ENCODE measurements at regions of chr13 and their contacts with region 1.

Region 1: GRCh38 chr13:74133657-74134201 is 475 bp downstream of the KLF12 start:
- DNase-seq: peak; percentile 84 to 89
- ATAC-seq: peak; percentile 64 to 89 (median 73)
- H3K4me3 ChIP-seq: peak overlapping the region; percentile 65 to 98 (median 89)
- H3K27ac ChIP-seq: peak overlapping the region; percentile 93 to 99 (median 97)
- H3K4me1 ChIP-seq: peaks cover 0 to 47% (median 29%) of the 10 kb centered on the region in 9 donors
- H3K27me3 ChIP-seq: peaks cover 0 to 12% (median 0%) of the 10 kb centered on the region in 7 donors
- CTCF ChIP-seq: no peak

Region 2: GRCh38 chr13:73473016-73473415 is 660.7 kb before region 1 on chr13:
- intact Hi-C with region 1: no loop called
- DNase-seq: no peak
- ATAC-seq: peak in 1 of 8 donors; percentile 13
- H3K4me3 ChIP-seq: no peak overlapping the region
- H3K27ac ChIP-seq: no peak overlapping the region
- H3K4me1 ChIP-seq: no peaks in the 10 kb centered on the region
- H3K27me3 ChIP-seq: no peaks in the 10 kb centered on the region
- CTCF ChIP-seq: no peak

Region 3: DNA sequence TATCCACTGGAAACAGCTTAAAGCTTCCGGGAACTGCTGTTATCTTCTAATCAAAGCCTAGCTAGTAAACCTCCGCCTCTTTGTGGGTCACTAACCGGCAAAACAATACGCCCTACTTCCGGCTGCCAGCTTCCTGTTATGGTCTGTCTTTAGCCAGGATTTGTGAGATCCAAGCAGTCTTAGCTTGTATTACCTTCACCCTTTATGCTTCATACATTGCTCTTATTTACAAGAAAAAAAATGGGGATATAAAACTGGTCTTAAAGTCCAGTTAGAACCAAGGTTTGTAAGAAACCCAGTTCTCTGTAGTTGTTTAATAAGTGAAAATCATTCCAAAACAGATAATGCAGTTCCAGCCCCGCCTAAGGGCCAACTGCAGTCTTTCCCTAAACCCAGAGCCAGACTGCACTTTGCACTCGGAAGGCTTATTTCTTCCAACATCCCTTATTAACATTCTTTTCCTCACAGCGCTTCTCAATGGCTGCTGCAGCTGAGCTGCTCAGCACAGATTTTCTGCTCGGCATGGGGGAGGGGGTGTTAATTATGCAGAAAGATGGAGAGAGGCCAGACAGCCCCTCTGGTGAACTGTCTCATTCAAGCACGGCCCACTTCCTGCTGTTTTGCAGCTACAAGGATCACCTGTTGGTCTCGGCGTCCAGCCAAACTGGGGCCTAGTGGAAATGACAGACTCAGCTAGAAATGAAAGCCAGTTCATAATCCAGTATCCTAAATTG is 367.9 kb before region 1 on chr13:
- intact Hi-C with region 1: loop called in 1 of 10 experiments (anchors 5 kb)
- DNase-seq: peak; percentile 80 to 93
- ATAC-seq: peak; percentile 72 to 93 (median 86)
- H3K4me3 ChIP-seq: peak overlapping the region in 6 of 10 donors; percentile 6 to 27 (median 16)
- H3K27ac ChIP-seq: peak overlapping the region; percentile 1 to 81 (median 66)
- H3K4me1 ChIP-seq: peaks cover 0 to 37% (median 33%) of the 10 kb centered on the region in 9 donors
- H3K27me3 ChIP-seq: no peaks in the 10 kb centered on the region
- CTCF ChIP-seq: peak in 1 of 9 donors; percentile 18

Region 4: GRCh38 chr13:73849292-73849691 is 284.4 kb before region 1 on chr13:
- intact Hi-C with region 1: loop called in 1 of 10 experiments (anchors 10 kb)
- DNase-seq: no peak
- ATAC-seq: peak in 1 of 8 donors; percentile 49
- H3K4me3 ChIP-seq: no peak overlapping the region
- H3K27ac ChIP-seq: no peak overlapping the region
- H3K4me1 ChIP-seq: peaks cover 0 to 21% (median 3%) of the 10 kb centered on the region in 9 donors
- H3K27me3 ChIP-seq: no peaks in the 10 kb centered on the region
- CTCF ChIP-seq: peak in 7 of 9 donors; percentile 30 to 55 (median 41)

Region 5: GRCh38 chr13:73967397-73968165 is 166.1 kb before region 1 on chr13:
- intact Hi-C with region 1: loop called in 1 of 10 experiments (anchors 5 kb)
- DNase-seq: no peak
- ATAC-seq: peak in 1 of 8 donors; percentile 58
- H3K4me3 ChIP-seq: no peak overlapping the region
- H3K27ac ChIP-seq: no peak overlapping the region
- H3K4me1 ChIP-seq: peaks cover 4 to 71% (median 43%) of the 10 kb centered on the region in 9 donors
- H3K27me3 ChIP-seq: no peaks in the 10 kb centered on the region
- CTCF ChIP-seq: no peak

Region 6: GRCh38 chr13:74062933-74063332 is 70.8 kb before region 1 on chr13:
- intact Hi-C with region 1: loop called in 4 of 10 experiments (anchors 1 to 5 kb)
- DNase-seq: peak; percentile 44 to 80
- ATAC-seq: peak; percentile 94 to 99 (median 96)
- H3K4me3 ChIP-seq: peak overlapping the region in 8 of 10 donors; percentile 2 to 43 (median 32)
- H3K27ac ChIP-seq: peak overlapping the region; percentile 31 to 88 (median 75)
- H3K4me1 ChIP-seq: peaks cover 6 to 79% (median 50%) of the 10 kb centered on the region in 9 donors
- H3K27me3 ChIP-seq: no peaks in the 10 kb centered on the region
- CTCF ChIP-seq: no peak

Region 7: GRCh38 chr13:74287724-74288169 is 154.0 kb after region 1 on chr13:
- intact Hi-C with region 1: loop called in 6 of 10 experiments (anchors 2 to 10 kb)
- DNase-seq: peak; percentile 65 to 85
- ATAC-seq: peak in 7 of 8 donors; percentile 9 to 63 (median 48)
- H3K4me3 ChIP-seq: peak overlapping the region in 8 of 10 donors; percentile 7 to 50 (median 34)
- H3K27ac ChIP-seq: peak overlapping the region in 4 of 10 donors; percentile 25 to 68 (median 52)
- H3K4me1 ChIP-seq: peaks cover 0 to 42% (median 22%) of the 10 kb centered on the region in 9 donors
- H3K27me3 ChIP-seq: no peaks in the 10 kb centered on the region
- CTCF ChIP-seq: no peak

Region 8: DNA sequence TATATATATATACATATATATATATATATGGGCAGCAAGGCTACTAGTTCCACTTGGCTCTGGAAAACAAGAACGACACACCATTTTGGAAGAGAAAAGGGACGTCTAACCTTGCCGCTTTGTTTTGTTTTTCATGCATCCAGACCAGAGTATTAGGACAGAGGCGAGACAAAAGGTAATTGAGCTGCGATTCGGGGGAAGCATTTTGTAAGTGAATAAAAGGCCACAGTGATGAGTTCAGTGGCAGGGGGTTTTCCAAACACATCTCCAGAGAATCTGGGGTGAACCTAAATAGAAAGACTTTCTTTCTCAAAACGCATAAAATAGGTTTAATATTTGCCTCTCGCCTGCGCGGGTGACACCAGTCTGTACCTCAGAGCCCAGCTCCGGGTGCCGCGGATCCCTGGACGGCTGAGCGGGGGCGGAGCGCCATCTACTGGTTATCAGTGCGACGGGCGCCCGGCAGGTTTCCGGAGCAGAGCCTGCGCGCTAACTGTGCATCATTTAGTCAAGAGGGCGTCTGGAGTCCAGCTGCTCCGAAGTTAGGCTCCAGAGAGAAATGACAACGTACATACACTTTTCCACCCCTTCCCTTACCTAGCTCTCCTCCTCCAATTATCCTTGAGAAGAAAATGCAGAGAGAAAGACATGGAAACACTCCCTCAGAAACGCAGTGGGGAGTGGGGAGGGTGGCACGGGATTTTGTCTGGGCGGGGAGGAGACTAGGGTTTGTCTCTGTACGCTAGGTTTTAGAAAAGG is 1085.9 kb after region 1 on chr13:
- intact Hi-C with region 1: loop called in 1 of 10 experiments (anchors 10 kb)
- DNase-seq: peak; percentile 80 to 86
- ATAC-seq: peak; percentile 93 to 99 (median 97)
- H3K4me3 ChIP-seq: peak overlapping the region in 9 of 10 donors; percentile 0 to 47 (median 37)
- H3K27ac ChIP-seq: no peak overlapping the region
- H3K4me1 ChIP-seq: peaks cover 0 to 9% (median 5%) of the 10 kb centered on the region in 9 donors
- H3K27me3 ChIP-seq: peaks cover 0 to 16% (median 0%) of the 10 kb centered on the region in 7 donors
- CTCF ChIP-seq: peak; percentile 91 to 99 (median 98)